ENCODE measurements at regions of chr4 and their contacts with region 1.

Region 1: GRCh38 chr4:25144870-25145481 is 15.3 kb downstream of the SEPSECS start:
- DNase-seq: no peak
- ATAC-seq: peak; percentile 63
- H3K4me3 ChIP-seq: no peak overlapping the region
- H3K27ac ChIP-seq: no peak overlapping the region
- H3K4me1 ChIP-seq: no peaks in the 10 kb centered on the region
- H3K27me3 ChIP-seq: no peaks in the 10 kb centered on the region
- CTCF ChIP-seq: peak; percentile 35 to 52 (median 52); a peak in 5 of 6 replicates
- EP300 ChIP-seq: no peak
- POLR2A ChIP-seq: no peak
- RAD21 ChIP-seq: peak; percentile 56

Region 2: GRCh38 chr4:24488399-24489164 is 656.4 kb before region 1 on chr4:
- CTCF ChIA-PET with region 1: interaction called, 3 read pairs
- POLR2A ChIA-PET with region 1: no interaction called
- RAD21 ChIA-PET with region 1: no interaction called
- SMC1A ChIA-PET with region 1: no interaction called
- in situ Hi-C with region 1: no loop called
- intact Hi-C with region 1: loop called (anchors 5 kb)
- DNase-seq: peak; percentile 5
- ATAC-seq: peak; percentile 99
- H3K4me3 ChIP-seq: no peak overlapping the region
- H3K27ac ChIP-seq: no peak overlapping the region
- H3K4me1 ChIP-seq: no peaks in the 10 kb centered on the region
- H3K27me3 ChIP-seq: no peaks in the 10 kb centered on the region
- CTCF ChIP-seq: peak; percentile 82 to 94 (median 88); a peak in 5 of 6 replicates
- EP300 ChIP-seq: no peak
- POLR2A ChIP-seq: no peak
- RAD21 ChIP-seq: peak; percentile 79

Region 3: GRCh38 chr4:24980064-24980690 is 164.8 kb before region 1 on chr4:
- CTCF ChIA-PET with region 1: interaction called, 89 read pairs
- POLR2A ChIA-PET with region 1: no interaction called
- RAD21 ChIA-PET with region 1: interaction called, 17 read pairs
- SMC1A ChIA-PET with region 1: interaction called, 27 read pairs
- in situ Hi-C with region 1: no loop called
- intact Hi-C with region 1: loop called (anchors 1 kb)
- DNase-seq: peak; percentile 19
- ATAC-seq: peak; percentile 85
- H3K4me3 ChIP-seq: no peak overlapping the region
- H3K27ac ChIP-seq: no peak overlapping the region
- H3K4me1 ChIP-seq: no peaks in the 10 kb centered on the region
- H3K27me3 ChIP-seq: no peaks in the 10 kb centered on the region
- CTCF ChIP-seq: peak; percentile 76 to 82 (median 78)
- EP300 ChIP-seq: no peak
- POLR2A ChIP-seq: no peak
- RAD21 ChIP-seq: peak; percentile 63

Region 4: DNA sequence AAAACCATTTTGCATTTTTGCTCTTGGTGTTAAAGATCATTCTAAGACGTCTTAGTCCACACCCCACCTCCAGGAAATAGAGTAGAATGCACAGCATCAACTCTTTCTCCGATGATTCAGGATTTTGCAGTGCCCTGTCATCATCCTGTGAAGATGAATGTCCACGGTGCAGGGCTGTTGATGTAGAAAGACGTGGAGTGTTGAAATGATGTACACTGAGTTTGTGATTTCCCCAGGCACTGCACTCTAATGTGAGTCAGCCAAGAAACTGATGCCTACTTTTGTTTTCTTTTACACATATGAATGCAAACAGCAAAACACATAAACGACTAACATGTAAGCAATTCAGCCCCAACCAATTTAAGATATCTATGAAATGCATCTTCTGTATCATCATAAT is 124.7 kb before region 1 on chr4:
- CTCF ChIA-PET with region 1: no interaction called
- POLR2A ChIA-PET with region 1: no interaction called
- RAD21 ChIA-PET with region 1: no interaction called
- SMC1A ChIA-PET with region 1: no interaction called
- in situ Hi-C with region 1: no loop called
- intact Hi-C with region 1: no loop called
- DNase-seq: no peak
- ATAC-seq: no peak
- H3K4me3 ChIP-seq: no peak overlapping the region
- H3K27ac ChIP-seq: no peak overlapping the region
- H3K4me1 ChIP-seq: no peaks in the 10 kb centered on the region
- H3K27me3 ChIP-seq: no peaks in the 10 kb centered on the region; a peak in 1 of 4 replicates
- CTCF ChIP-seq: no peak
- EP300 ChIP-seq: no peak
- POLR2A ChIP-seq: no peak
- RAD21 ChIP-seq: no peak

Region 5: GRCh38 chr4:25129917-25130316 is 15.1 kb before region 1 on chr4:
- CTCF ChIA-PET with region 1: interaction called, 36 read pairs
- POLR2A ChIA-PET with region 1: interaction called, 3 read pairs
- RAD21 ChIA-PET with region 1: interaction called, 3 read pairs
- SMC1A ChIA-PET with region 1: interaction called, 11 read pairs
- in situ Hi-C with region 1: no loop called
- intact Hi-C with region 1: no loop called
- DNase-seq: no peak
- ATAC-seq: no peak
- H3K4me3 ChIP-seq: no peak overlapping the region
- H3K27ac ChIP-seq: no peak overlapping the region
- H3K4me1 ChIP-seq: no peaks in the 10 kb centered on the region
- H3K27me3 ChIP-seq: no peaks in the 10 kb centered on the region
- CTCF ChIP-seq: no peak
- EP300 ChIP-seq: no peak
- POLR2A ChIP-seq: no peak
- RAD21 ChIP-seq: no peak

Region 6: GRCh38 chr4:25159884-25160713 is 15.1 kb after region 1 on chr4 and contains the start of gene SEPSECS:
- CTCF ChIA-PET with region 1: interaction called, 15 read pairs
- POLR2A ChIA-PET with region 1: interaction called, 5 read pairs
- RAD21 ChIA-PET with region 1: interaction called, 6 read pairs
- SMC1A ChIA-PET with region 1: interaction called, 7 read pairs
- in situ Hi-C with region 1: no loop called
- intact Hi-C with region 1: no loop called
- DNase-seq: peak; percentile 96
- ATAC-seq: peak; percentile 90
- H3K4me3 ChIP-seq: peak within 1 kb of the TSS; percentile 94
- H3K27ac ChIP-seq: peak within 1 kb of the TSS; percentile 96
- H3K4me1 ChIP-seq: peaks cover 4% of the 10 kb centered on the region
- H3K27me3 ChIP-seq: no peaks in the 10 kb centered on the region
- CTCF ChIP-seq: no peak
- EP300 ChIP-seq: no peak
- POLR2A ChIP-seq: peak; percentile 96
- RAD21 ChIP-seq: no peak
- polyA plus RNA-seq, gene SEPSECS: 2.8 to 2.9 TPM